Thyroid gland (tissue), 4 donors: ENCODE measurements at regions of chr12 and their contacts with region 1.

Region 1: GRCh38 chr12:123043536-123044001 is 63.1 kb downstream of the ARL6IP4 start:
- DNase-seq: peak; percentile 89 to 90
- H3K4me3 ChIP-seq: no peak overlapping the region
- H3K27ac ChIP-seq: no peak overlapping the region
- H3K4me1 ChIP-seq: peaks cover 0 to 14% of the 10 kb centered on the region in 2 donors
- H3K27me3 ChIP-seq: no peaks in the 10 kb centered on the region
- CTCF ChIP-seq: peak; percentile 46 to 90 (median 80)
- POLR2A ChIP-seq: no peak

Region 2: DNA sequence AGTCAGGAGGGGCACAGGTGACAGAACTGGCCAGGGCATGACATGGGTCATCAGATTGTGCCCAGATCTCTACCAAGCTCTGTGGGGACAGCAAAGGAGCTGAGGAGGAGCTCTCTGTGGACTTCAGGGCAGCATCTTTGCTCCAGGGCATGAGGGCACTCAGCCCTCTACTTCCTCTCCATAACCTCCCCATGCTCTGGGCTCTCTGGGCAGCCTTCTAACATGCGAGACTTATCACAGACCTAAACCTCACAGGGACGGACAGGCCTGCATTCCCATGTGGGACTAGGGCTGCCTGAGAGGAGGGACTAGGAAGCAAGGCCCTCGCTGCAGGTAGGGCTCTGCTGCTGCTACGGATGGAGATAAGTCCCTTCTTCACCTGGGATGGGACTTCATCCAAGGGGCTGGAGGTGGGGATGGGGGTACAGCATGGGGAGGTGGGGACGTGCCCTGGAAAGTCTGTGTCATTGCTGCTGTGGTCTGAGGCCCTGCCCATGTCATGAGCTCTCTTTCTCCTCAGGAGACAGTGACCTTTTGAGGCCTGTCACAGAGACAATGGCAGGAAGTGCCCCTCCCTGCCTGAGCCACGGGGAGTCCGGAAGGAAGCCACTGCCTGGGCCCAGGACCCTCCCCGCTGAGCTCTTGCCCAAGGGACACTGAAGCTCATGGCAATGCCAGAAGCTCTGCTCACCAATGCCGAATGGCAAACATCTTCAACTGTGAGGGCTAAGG is 63.2 kb after region 1 on chr12:
- intact Hi-C with region 1: loop called (anchors 10 kb)
- DNase-seq: no peak
- H3K4me3 ChIP-seq: no peak overlapping the region
- H3K27ac ChIP-seq: peak overlapping the region; percentile 24 to 68 (median 63)
- H3K4me1 ChIP-seq: peaks cover 37 to 55% of the 10 kb centered on the region in 2 donors
- H3K27me3 ChIP-seq: no peaks in the 10 kb centered on the region
- CTCF ChIP-seq: no peak
- POLR2A ChIP-seq: no peak

Region 3: GRCh38 chr12:123150744-123151456 is 107.3 kb after region 1 on chr12 and contains the start of gene PITPNM2:
- intact Hi-C with region 1: loop called (anchors 10 kb)
- DNase-seq: peak; percentile 63
- H3K4me3 ChIP-seq: peak within 1 kb of the TSS; percentile 53 to 78 (median 58)
- H3K27ac ChIP-seq: peak within 1 kb of the TSS; percentile 59 to 91 (median 75)
- H3K4me1 ChIP-seq: peaks cover 18 to 20% of the 10 kb centered on the region in 2 donors
- H3K27me3 ChIP-seq: no peaks in the 10 kb centered on the region
- CTCF ChIP-seq: peak in 3 of 6 experiments; percentile 36 to 46 (median 38)
- POLR2A ChIP-seq: peak in 1 of 2 donors; percentile 32
- total RNA-seq, gene PITPNM2: 4.1 to 22.4 (median 9.3) TPM

Region 4: GRCh38 chr12:123237646-123238329 is 194.2 kb after region 1 on chr12:
- intact Hi-C with region 1: loop called (anchors 5 kb)
- DNase-seq: peak; percentile 60 to 74
- H3K4me3 ChIP-seq: no peak overlapping the region
- H3K27ac ChIP-seq: no peak overlapping the region
- H3K4me1 ChIP-seq: peaks cover 15 to 25% of the 10 kb centered on the region in 2 donors
- H3K27me3 ChIP-seq: no peaks in the 10 kb centered on the region
- CTCF ChIP-seq: peak; percentile 33 to 84 (median 75)
- POLR2A ChIP-seq: no peak